ENCODE measurements at regions of chr11 and their contacts with region 1.

Region 1: DNA sequence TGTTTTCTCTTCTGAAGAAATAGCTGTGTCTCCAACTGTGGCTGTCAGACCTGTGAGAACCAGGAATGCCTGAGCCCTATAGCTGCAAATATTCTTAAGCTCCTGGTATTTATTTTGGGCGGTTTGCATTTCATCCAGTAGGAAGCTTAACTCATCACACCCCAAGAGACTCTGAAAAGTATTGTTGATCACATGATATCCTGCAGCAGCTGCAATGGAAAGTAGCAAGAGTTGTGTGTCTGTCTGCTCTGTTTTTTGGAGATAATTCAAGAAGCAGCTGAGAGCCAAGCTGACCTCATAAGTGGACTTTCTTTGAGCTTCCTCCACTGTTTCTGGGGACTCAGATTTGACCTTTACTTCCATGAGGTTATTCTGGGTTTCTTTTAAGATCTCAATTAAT is 36.4 kb upstream of the MRPL17 start:
- DNase-seq: no peak
- H3K4me3 ChIP-seq: no peak overlapping the region
- H3K27ac ChIP-seq: no peak overlapping the region
- H3K4me1 ChIP-seq: no peaks in the 10 kb centered on the region
- H3K27me3 ChIP-seq: no peaks in the 10 kb centered on the region
- CTCF ChIP-seq: no peak
- EP300 ChIP-seq: no peak
- POLR2A ChIP-seq: no peak
- RAD21 ChIP-seq: no peak

Region 2: DNA sequence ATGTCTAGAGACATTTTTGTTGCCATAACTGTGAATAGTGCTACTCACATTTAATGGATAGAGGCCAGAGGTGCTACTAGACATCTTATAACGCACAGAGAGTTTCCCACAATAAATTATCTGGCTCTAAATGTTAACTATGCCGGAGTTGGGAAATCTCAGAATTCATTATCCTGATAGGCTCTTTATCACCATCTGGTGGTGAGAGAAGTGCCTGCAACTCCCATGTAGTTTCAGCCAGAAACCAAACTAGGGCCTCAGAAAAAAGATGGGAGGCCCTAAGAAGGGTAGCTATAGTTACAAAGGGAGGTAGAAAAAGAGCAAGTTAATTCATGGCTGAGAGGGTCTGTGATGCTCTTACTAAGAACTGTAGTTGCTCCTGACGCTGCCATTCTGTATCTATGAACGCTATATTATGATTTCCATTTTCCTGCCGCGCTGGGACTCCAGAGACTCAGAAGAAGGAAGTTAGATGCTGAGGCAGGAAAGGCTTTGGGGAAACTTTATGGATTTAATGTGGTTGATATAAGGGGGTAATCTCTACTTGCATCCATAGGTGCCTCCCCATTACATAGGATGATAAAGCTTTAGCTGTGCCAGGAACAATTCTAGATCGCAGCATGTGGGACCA is 13.6 kb before region 1 on chr11:
- CTCF ChIA-PET with region 1: interaction called, 15 read pairs
- POLR2A ChIA-PET with region 1: no interaction called
- DNase-seq: peak in 1 of 2 experiments; percentile 64
- H3K4me3 ChIP-seq: no peak overlapping the region
- H3K27ac ChIP-seq: no peak overlapping the region
- H3K4me1 ChIP-seq: no peaks in the 10 kb centered on the region
- H3K27me3 ChIP-seq: peaks cover 0 to 2% (median 0%) of the 10 kb centered on the region in 4 experiments; a peak in 1 of 7 replicates
- CTCF ChIP-seq: peak in 2 of 3 experiments; percentile 77 to 80; a peak in 3 of 4 replicates
- EP300 ChIP-seq: no peak
- POLR2A ChIP-seq: no peak
- RAD21 ChIP-seq: peak; percentile 64 to 71

Region 3: DNA sequence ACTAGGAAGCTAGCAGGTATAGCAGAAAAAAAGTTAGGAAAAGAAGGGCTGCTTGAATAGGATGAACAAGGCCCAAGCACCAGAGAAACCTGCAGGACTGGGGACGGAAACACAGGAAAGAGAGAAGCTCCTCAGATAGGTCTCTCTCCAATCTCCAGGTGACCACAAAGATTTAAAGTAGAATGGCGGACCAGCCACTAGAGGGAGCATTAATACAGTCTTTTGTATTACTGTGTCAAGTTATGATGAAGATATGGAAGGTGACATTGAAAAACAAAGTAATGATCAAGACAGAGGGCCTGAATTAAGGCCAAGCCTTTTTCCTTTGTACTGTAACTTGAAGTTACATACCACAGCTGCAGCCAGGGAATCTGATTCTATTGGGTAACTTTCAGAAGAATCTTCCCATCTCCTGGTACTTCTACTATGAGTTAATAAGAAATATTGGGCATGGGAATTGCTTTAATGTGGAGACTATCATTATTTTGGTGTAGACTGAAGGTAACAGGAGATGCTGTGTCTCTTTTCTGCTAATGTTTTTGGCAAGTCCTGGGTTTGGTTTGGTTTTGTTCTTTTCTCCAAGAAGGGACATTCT is 18.4 kb after region 1 on chr11:
- CTCF ChIA-PET with region 1: interaction called, 10 read pairs
- POLR2A ChIA-PET with region 1: no interaction called
- DNase-seq: peak in 1 of 2 experiments; percentile 47
- H3K4me3 ChIP-seq: no peak overlapping the region
- H3K27ac ChIP-seq: no peak overlapping the region
- H3K4me1 ChIP-seq: no peaks in the 10 kb centered on the region
- H3K27me3 ChIP-seq: no peaks in the 10 kb centered on the region
- CTCF ChIP-seq: peak in 2 of 3 experiments; percentile 43 to 62; a peak in 2 of 4 replicates
- EP300 ChIP-seq: no peak
- POLR2A ChIP-seq: no peak
- RAD21 ChIP-seq: peak; percentile 48 to 56

Measured in H1 (cell line).